Right ventricle myocardium inferior (tissue), 1 donor: ENCODE measurements at regions of chr4 and their contacts with region 1.

Region 1: GRCh38 chr4:140993370-140993769 is 139.9 kb downstream of the RNF150 start:
- DNase-seq: no peak
- ATAC-seq: no peak

Region 2: DNA sequence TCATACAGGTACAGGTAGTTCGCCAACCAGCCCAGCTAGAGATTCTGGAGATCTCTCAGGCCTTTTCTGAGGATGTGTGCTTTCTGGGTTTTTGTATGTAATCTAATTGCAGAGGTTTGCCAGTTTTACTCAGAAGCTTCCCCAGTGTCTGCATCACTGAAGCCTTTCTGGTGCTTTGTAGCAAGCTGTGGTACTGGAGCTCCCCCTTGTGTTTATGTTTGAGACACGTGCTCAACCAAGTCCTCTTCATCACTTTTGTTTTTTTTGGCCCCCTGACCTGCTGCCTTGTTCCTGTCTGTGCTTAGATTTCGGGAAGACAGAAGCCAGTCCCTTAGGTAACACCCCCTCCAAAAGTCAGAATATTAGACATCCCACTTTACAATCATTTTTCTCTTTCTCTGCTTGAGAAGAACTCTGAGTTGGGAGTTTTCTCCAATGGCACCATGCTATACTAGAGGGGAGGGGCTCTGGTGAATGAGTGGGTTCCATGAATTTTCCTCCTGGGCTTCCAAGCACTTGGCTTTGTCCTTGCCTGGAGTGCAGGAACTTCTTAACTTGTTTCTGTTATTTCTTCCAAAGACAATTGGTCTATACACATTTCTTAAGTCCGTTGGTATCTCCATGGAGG is 108.8 kb before region 1 on chr4:
- intact Hi-C with region 1: loop called (anchors 5 kb)
- DNase-seq: no peak
- ATAC-seq: peak; percentile 63

Region 3: GRCh38 chr4:141246243-141246642 is 252.9 kb after region 1 on chr4:
- intact Hi-C with region 1: no loop called
- DNase-seq: no peak
- ATAC-seq: no peak